Endothelial cell of umbilical vein (primary cell): ENCODE measurements at regions of chr13 and their contacts with region 1.

Region 1: GRCh38 chr13:44917589-44918325 is 71.5 kb downstream of the NUFIP1 start:
- DNase-seq: peak; percentile 98
- H3K4me3 ChIP-seq: peak overlapping the region; percentile 4 to 66 (median 38)
- H3K27ac ChIP-seq: peak overlapping the region; percentile 95
- H3K4me1 ChIP-seq: peaks cover 29% of the 10 kb centered on the region
- H3K27me3 ChIP-seq: no peaks in the 10 kb centered on the region
- CTCF ChIP-seq: peak; percentile 38 to 42
- POLR2A ChIP-seq: no peak

Region 2: GRCh38 chr13:44815623-44816022 is 102.1 kb before region 1 on chr13:
- CTCF ChIA-PET with region 1: no interaction called
- POLR2A ChIA-PET with region 1: no interaction called
- dilution Hi-C with region 1: no loop called
- intact Hi-C with region 1: loop called (anchors 1 kb)
- DNase-seq: peak; percentile 54
- H3K4me3 ChIP-seq: no peak overlapping the region
- H3K27ac ChIP-seq: no peak overlapping the region
- H3K4me1 ChIP-seq: peaks cover 29% of the 10 kb centered on the region
- H3K27me3 ChIP-seq: no peaks in the 10 kb centered on the region
- CTCF ChIP-seq: no peak
- POLR2A ChIP-seq: no peak

Region 3: DNA sequence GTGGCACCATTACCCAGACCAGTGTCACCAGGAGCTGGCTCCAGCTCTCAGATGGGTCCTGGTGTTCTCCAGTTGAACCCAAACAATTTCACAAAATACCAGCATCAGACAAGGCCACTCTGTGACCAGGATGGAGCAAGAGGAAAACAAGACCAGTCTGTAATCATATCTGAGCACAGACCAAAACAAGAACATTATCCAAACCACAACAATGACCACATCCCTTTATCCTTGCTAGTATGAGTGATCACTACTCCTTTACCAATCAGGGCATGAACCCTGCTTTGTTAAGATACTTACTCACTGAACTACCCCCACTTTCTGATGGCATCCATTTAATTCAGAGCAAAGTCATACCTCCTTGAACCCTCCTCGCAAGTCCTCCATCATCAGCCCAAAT is 74.4 kb before region 1 on chr13:
- CTCF ChIA-PET with region 1: no interaction called
- POLR2A ChIA-PET with region 1: no interaction called
- dilution Hi-C with region 1: no loop called
- intact Hi-C with region 1: loop called (anchors 2 kb)
- DNase-seq: no peak
- H3K4me3 ChIP-seq: no peak overlapping the region
- H3K27ac ChIP-seq: no peak overlapping the region
- H3K4me1 ChIP-seq: peaks cover 38% of the 10 kb centered on the region
- H3K27me3 ChIP-seq: no peaks in the 10 kb centered on the region
- CTCF ChIP-seq: no peak
- POLR2A ChIP-seq: no peak

Region 4: DNA sequence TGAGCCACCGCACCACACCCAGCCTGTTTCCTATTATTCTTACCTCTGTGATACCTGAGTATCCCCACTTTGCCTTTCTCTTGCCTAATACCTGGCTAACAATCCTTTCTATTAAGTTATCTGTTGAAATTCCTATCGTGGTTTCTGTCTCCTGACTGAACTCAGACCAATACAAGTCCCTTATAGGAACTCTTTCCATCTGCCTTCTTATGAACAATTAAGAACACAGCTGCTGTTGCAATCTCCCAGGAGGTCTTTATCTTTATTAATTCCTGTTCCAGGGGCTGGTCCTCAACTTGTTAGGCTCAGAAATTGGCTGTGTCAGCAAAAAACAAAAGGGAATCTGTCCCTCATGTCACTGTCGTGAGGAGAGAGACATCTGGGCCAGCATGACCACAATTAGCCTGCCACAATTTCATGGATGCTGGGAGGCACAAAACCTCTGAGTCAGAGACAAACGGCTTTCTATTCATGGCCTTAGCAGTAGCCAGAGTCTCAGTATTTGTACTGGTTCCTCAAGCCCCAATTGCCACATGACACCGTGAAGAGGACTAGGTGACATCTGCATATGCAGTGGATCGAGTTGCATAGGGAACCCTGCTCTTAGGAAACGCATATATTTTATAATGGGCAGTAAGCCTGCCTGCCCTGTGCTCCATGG is 13.3 kb after region 1 on chr13:
- CTCF ChIA-PET with region 1: interaction called, 29 read pairs
- POLR2A ChIA-PET with region 1: interaction called, 8 read pairs
- dilution Hi-C with region 1: no loop called
- intact Hi-C with region 1: loop called (anchors 1 kb)
- DNase-seq: no peak
- H3K4me3 ChIP-seq: no peak overlapping the region
- H3K27ac ChIP-seq: peak overlapping the region; percentile 94
- H3K4me1 ChIP-seq: peaks cover 63% of the 10 kb centered on the region
- H3K27me3 ChIP-seq: no peaks in the 10 kb centered on the region
- CTCF ChIP-seq: no peak
- POLR2A ChIP-seq: no peak